CD8-positive, alpha-beta T cell (primary cell): ENCODE measurements at regions of chr11 and their contacts with region 1.

Region 1: GRCh38 chr11:48261600-48261999 is 2.1 kb upstream of the OR4X1 start:
- DNase-seq: no peak
- ATAC-seq: no peak
- H3K4me3 ChIP-seq: no peak overlapping the region
- H3K4me3 Mint-ChIP-seq: no peak overlapping the region
- H3K27ac ChIP-seq: no peak overlapping the region
- H3K27ac Mint-ChIP-seq: no peak overlapping the region
- H3K4me1 ChIP-seq: no peaks in the 10 kb centered on the region
- H3K4me1 Mint-ChIP-seq: peaks cover 2% of the 10 kb centered on the region
- H3K27me3 ChIP-seq: no peaks in the 10 kb centered on the region
- H3K27me3 Mint-ChIP-seq: peaks cover 16% of the 10 kb centered on the region
- CTCF ChIP-seq: no peak

Region 2: GRCh38 chr11:48315114-48315513 is 53.5 kb after region 1 on chr11:
- CTCF ChIA-PET with region 1: no interaction called
- POLR2A ChIA-PET with region 1: no interaction called
- intact Hi-C with region 1: loop called in 1 of 2 experiments (anchors 10 kb)
- DNase-seq: no peak
- ATAC-seq: no peak
- H3K4me3 ChIP-seq: no peak overlapping the region
- H3K4me3 Mint-ChIP-seq: no peak overlapping the region
- H3K27ac ChIP-seq: no peak overlapping the region
- H3K27ac Mint-ChIP-seq: no peak overlapping the region
- H3K4me1 ChIP-seq: no peaks in the 10 kb centered on the region
- H3K4me1 Mint-ChIP-seq: no peaks in the 10 kb centered on the region
- H3K27me3 ChIP-seq: no peaks in the 10 kb centered on the region
- H3K27me3 Mint-ChIP-seq: peaks cover 11% of the 10 kb centered on the region
- CTCF ChIP-seq: no peak